ENCODE measurements at regions of chr10 and their contacts with region 1.

Region 1: DNA sequence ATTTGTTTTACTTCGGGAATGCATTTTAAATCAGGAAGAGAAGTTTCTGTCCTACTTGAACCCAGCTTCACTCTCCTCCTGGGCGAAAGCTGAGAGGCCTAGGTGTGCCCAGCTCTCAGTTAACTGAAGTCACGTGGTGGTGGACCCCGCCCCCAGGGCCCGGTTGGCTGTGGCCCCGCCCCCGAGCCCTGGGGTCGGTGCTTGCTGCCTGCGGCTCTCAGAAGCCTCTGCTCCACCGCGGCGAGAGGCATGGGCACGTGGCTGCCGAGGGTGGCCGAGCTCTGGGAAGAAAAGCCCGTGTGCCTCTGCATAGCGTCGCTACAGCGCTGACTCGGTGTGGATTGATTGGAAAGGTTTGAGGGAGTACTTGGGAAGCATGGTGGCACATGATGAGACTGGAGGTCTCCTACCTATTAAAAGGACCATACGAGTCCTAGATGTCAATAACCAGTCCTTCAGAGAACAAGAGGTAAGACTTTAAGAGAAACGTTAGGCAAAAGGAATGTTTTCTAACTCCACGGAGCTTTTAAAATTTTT is 34.1 kb downstream of the NET1 start:
- DNase-seq: peak in 1 of 2 donors; percentile 96
- H3K4me3 ChIP-seq: peak overlapping the region; percentile 37 to 56
- H3K27ac ChIP-seq: peak overlapping the region; percentile 81
- H3K4me1 ChIP-seq: peaks cover 16% of the 10 kb centered on the region
- H3K27me3 ChIP-seq: no peaks in the 10 kb centered on the region
- CTCF ChIP-seq: no peak
- POLR2A ChIP-seq: peak in 1 of 2 donors; percentile 78

Region 2: GRCh38 chr10:5488309-5489167 is 42.1 kb after region 1 on chr10:
- intact Hi-C with region 1: no loop called
- DNase-seq: no peak
- H3K4me3 ChIP-seq: no peak overlapping the region
- H3K27ac ChIP-seq: no peak overlapping the region
- H3K4me1 ChIP-seq: peaks cover 5% of the 10 kb centered on the region
- H3K27me3 ChIP-seq: no peaks in the 10 kb centered on the region
- CTCF ChIP-seq: no peak
- POLR2A ChIP-seq: no peak

Region 3: DNA sequence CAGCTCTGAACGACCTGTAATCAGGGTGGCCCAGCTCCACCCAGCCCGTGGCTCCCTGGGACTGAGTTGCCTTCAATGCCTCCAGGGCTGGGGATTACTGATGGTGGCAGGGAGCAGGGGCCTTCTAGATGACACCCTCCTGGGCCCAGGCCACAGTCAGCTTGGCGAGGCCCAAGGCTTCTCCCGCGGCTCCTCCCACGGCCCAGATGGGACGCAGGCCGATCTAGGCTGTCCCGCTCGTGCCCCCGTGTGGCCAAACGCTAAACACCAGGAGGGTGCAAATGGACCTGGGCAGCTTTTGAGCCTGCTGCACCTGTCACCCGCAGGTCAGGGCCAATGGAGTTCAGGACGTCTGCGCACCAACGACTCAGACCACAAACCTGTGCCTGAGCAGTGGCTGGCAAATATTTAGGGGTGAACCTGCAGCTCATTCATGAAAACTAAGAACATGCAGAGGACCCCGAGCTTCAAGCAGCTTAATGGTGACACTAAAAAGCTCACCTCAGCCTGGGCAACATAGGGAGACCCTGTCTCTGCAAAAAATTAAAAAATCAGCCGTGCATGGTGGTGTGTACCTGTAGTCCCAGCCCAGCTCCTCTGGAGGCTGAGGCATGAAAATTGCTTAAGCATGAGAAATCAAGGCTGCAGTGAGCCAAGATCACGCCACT is 176.8 kb after region 1 on chr10:
- intact Hi-C with region 1: loop called (anchors 2 kb)
- DNase-seq: no peak
- H3K4me3 ChIP-seq: no peak overlapping the region
- H3K27ac ChIP-seq: peak overlapping the region; percentile 60
- H3K4me1 ChIP-seq: peaks cover 22% of the 10 kb centered on the region
- H3K27me3 ChIP-seq: no peaks in the 10 kb centered on the region
- CTCF ChIP-seq: peak; percentile 88 to 94 (median 91)
- POLR2A ChIP-seq: no peak

Region 4: DNA sequence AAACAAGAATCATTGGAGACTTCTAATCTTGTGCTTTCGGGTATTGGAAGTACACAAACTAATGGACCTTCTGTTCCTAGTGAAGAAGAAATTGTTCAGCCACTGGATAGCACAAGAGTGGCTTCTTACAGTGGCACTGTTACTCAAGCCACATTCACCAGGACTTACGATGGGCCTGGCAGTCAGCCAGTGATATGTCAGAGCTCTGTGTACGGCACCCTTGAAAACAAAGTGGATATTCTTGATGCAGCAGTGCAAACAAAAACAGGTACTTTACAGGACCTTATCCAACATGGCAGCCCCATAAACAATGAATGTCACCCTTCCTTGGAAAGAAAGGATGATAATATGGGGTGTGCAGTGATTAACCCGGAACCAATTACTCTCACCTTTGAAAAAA is 299.7 kb after region 1 on chr10:
- intact Hi-C with region 1: no loop called
- DNase-seq: no peak
- H3K4me3 ChIP-seq: no peak overlapping the region
- H3K27ac ChIP-seq: no peak overlapping the region
- H3K4me1 ChIP-seq: no peaks in the 10 kb centered on the region
- H3K27me3 ChIP-seq: no peaks in the 10 kb centered on the region
- CTCF ChIP-seq: no peak
- POLR2A ChIP-seq: no peak